HCT116 (cell line): ENCODE measurements at regions of chr19 and their contacts with region 1.

Region 1: DNA sequence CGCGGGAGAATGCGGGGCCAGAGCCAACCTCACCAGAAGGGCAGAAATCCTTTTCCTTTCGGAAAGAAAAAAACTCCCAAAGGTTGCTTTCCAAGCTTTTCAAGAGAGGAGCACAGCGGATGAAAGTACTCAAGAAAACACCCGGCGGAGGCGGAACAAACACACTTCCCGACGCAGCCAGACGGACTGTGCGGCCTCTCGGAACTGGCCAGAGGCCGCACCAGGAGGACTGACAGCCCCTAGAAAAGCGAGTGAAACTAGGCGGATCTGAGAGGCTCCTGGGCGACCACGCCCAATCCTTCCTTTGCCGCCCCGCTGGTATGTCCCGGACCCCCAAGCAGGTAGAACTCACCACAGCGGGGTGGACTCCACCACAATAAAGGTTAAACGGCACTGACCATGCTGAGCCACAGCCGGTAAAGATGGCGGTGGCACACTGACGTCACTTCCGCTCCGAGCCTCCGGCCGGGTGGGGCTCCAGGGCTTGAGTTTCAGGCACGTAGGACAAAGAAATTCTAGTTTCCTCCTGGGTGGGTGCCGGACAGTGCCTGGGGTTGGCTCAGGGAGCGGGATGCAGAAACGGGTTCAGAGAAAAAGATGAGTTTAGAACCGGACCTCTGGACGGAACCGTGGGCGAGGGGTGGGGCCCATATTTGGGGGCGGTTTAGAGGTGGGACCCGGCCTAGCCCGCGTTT is at the start of gene ZNF562:
- DNase-seq: peak; percentile 90
- ATAC-seq: peak; percentile 90
- H3K4me3 ChIP-seq: peak within 1 kb of the TSS; percentile 54 to 72
- H3K27ac ChIP-seq: peak within 1 kb of the TSS; percentile 95
- H3K4me1 ChIP-seq: peaks cover 2 to 12% of the 10 kb centered on the region in 2 experiments; a peak in 1 of 4 replicates
- H3K27me3 ChIP-seq: no peaks in the 10 kb centered on the region
- CTCF ChIP-seq: no peak
- POLR2A ChIP-seq: peak; percentile 51
- RAD21 ChIP-seq: no peak
- total RNA-seq, gene ZNF562: 37.8 TPM

Region 2: GRCh38 chr19:9323919-9324583 is 350.8 kb before region 1 on chr19 and contains the start of gene ZNF559:
- CTCF ChIA-PET with region 1: no interaction called
- POLR2A ChIA-PET with region 1: no interaction called
- RAD21 ChIA-PET with region 1: no interaction called
- intact Hi-C with region 1: loop called (anchors 10 kb)
- DNase-seq: peak; percentile 89
- ATAC-seq: peak; percentile 98
- H3K4me3 ChIP-seq: peak within 1 kb of the TSS; percentile 73 to 80
- H3K27ac ChIP-seq: peak within 1 kb of the TSS; percentile 80
- H3K4me1 ChIP-seq: peaks cover 0 to 16% of the 10 kb centered on the region in 2 experiments; a peak in 2 of 4 replicates
- H3K27me3 ChIP-seq: no peaks in the 10 kb centered on the region
- CTCF ChIP-seq: peak in 2 of 3 experiments; percentile 47 to 50; a peak in 4 of 6 replicates
- POLR2A ChIP-seq: no peak
- RAD21 ChIP-seq: no peak
- total RNA-seq, gene ZNF559: 10.9 TPM

Region 3: DNA sequence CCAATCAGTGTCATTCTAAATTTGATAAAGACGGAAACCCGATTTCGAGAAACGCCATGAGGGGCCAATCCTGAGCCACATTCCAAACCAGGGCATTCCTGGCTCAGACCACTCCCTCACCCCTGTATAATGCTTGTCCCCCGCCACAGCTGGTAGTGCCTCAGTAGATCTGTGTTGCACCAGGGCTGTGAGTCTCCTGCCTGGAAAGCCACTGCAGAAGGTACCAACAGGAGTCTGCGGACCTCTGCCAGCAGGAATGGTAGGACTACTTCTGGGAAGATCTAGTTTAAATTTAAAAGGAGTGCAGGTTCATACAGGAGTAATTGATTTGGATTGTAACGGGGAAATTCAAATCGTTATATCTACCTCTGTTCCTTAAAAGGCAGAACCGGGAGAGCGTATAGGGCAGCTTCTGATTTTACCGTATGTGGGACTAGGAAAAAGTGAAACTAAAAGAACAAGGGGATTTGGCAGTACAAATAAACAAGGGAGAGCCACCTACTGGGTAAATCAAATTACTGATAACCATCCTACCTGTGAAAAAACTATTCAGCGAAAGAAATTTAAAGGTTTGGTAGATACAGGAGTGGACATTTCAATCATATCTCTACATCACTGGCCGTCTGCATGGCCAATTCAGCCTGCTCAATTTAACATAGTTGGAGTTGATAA is 218.7 kb before region 1 on chr19:
- CTCF ChIA-PET with region 1: no interaction called
- POLR2A ChIA-PET with region 1: no interaction called
- RAD21 ChIA-PET with region 1: no interaction called
- intact Hi-C with region 1: no loop called
- DNase-seq: no peak
- ATAC-seq: no peak
- H3K4me3 ChIP-seq: no peak overlapping the region
- H3K27ac ChIP-seq: no peak overlapping the region
- H3K4me1 ChIP-seq: no peaks in the 10 kb centered on the region
- H3K27me3 ChIP-seq: no peaks in the 10 kb centered on the region
- CTCF ChIP-seq: no peak
- POLR2A ChIP-seq: no peak
- RAD21 ChIP-seq: no peak

Region 4: GRCh38 chr19:9818734-9819589 is 144.2 kb after region 1 on chr19 and contains the start of gene FBXL12:
- CTCF ChIA-PET with region 1: no interaction called
- POLR2A ChIA-PET with region 1: no interaction called
- RAD21 ChIA-PET with region 1: no interaction called
- intact Hi-C with region 1: loop called (anchors 1 kb)
- DNase-seq: peak; percentile 99
- ATAC-seq: peak; percentile 87
- H3K4me3 ChIP-seq: peak within 1 kb of the TSS; percentile 89 to 96
- H3K27ac ChIP-seq: peak within 1 kb of the TSS; percentile 98
- H3K4me1 ChIP-seq: peaks cover 13 to 14% of the 10 kb centered on the region in 2 experiments; a peak in 3 of 4 replicates
- H3K27me3 ChIP-seq: no peaks in the 10 kb centered on the region
- CTCF ChIP-seq: no peak
- POLR2A ChIP-seq: peak; percentile 57
- RAD21 ChIP-seq: no peak
- total RNA-seq, gene FBXL12: 21.9 TPM